ENCODE measurements at regions of chr4 and their contacts with region 1.

Region 1: DNA sequence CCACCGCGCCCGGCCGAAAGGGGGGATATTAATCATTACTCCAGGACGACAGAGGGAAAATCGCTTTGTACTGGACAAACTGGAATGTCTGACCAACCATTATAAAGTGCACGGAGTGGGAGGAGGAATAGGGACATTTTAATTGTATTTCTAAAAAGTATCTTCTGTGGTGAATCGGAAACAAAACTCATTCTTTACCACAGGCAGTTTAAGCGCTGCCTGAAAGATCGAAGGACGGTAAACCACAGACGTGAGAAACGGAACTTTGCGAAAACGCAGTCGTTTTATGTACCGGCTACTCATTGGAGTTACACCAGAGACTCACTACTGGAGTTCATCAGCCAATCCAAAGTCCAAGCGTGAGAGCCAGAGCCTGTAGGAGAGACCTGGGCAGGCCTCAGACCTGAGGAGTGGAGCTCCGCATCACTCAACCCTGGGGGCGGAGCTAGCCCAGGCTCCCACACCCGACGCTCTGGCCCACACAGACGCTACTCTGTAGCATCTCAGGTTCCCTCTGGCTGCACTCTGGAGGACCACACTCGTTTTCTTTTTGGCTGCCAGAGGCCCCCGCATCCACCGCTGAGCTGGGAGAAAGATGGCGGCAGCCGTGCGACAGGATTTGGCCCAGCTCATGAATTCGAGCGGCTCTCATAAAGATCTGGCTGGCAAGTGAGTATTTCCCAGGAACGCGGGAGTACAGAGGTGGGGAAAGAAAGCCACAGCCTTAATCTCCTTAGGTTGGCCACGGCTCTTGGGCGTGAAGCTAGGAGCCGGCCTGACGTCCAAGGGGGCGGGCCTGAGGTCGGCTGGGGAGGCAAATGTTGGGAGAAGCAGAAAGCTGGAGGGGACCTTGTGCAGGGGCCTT is at the start of gene COPS4:
- DNase-seq: peak; percentile 93 to 97 (median 95)
- H3K4me3 ChIP-seq: peak within 1 kb of the TSS; percentile 87
- H3K27ac ChIP-seq: peak within 1 kb of the TSS; percentile 56 to 85
- H3K4me1 ChIP-seq: peaks cover 5% of the 10 kb centered on the region
- H3K27me3 ChIP-seq: no peaks in the 10 kb centered on the region
- CTCF ChIP-seq: peak; percentile 62 to 69 (median 67)
- EP300 ChIP-seq: no peak
- POLR2A ChIP-seq: peak; percentile 5
- total RNA-seq, gene COPS4: 30.7 to 43.2 (median 34.1) TPM

Region 2: GRCh38 chr4:82373816-82374625 is 660.8 kb before region 1 on chr4 and contains the start of gene HNRNPD:
- intact Hi-C with region 1: loop called in 2 of 4 experiments (anchors 10 kb)
- DNase-seq: peak; percentile 96 to 99 (median 98)
- H3K4me3 ChIP-seq: peak within 1 kb of the TSS; percentile 97
- H3K27ac ChIP-seq: peak within 1 kb of the TSS; percentile 94 to 95
- H3K4me1 ChIP-seq: peaks cover 5% of the 10 kb centered on the region
- H3K27me3 ChIP-seq: no peaks in the 10 kb centered on the region
- CTCF ChIP-seq: peak in 2 of 3 donors; percentile 7 to 30
- EP300 ChIP-seq: no peak
- POLR2A ChIP-seq: peak; percentile 91
- total RNA-seq, gene HNRNPD: 85.1 to 243 (median 185) TPM

Region 3: DNA sequence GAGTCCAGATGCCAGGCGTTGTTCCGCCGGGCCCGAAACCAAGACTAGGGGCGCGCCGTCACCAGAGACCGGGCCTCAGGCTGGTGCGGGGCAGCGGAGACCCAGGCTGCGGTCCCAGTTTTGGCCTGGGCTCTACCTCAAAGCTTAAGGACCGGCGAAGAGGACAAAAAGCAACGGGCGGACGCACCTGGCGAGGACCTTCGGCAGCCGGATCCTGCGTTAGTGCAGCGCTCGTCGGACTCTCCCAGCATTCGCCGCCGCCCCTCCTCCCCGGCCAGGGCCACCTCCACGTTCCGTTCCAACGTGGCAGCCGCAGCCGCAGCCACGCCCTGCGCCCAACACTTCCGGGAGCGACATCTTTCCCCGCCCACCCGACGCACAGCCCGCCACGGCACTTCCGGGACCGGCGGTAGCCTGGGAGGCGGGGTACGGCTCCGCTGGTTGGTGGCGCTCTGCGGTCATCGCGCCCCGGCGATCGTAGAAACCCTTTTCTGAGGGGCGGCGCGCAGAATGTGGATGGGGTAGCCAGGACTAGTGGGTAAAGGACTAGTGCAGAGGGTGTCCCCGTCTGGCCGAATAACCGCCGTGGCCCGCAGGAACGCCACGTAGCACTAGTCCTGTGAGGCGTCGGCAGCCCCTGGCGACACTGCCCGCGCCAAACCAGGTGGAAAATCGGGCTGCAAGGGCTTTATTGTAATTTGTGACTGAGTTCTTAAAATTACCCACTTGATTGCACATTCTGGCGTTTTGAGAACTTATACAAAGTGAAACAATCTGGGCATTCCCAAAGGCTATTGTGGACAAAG is 143.8 kb before region 1 on chr4 and contains the start of gene SEC31A:
- intact Hi-C with region 1: loop called in 1 of 4 experiments (anchors 10 kb)
- DNase-seq: peak; percentile 93 to 97 (median 95)
- H3K4me3 ChIP-seq: peak within 1 kb of the TSS; percentile 76
- H3K27ac ChIP-seq: peak within 1 kb of the TSS; percentile 39 to 93
- H3K4me1 ChIP-seq: peaks cover 12% of the 10 kb centered on the region
- H3K27me3 ChIP-seq: no peaks in the 10 kb centered on the region
- CTCF ChIP-seq: no peak
- EP300 ChIP-seq: no peak
- POLR2A ChIP-seq: peak; percentile 93
- total RNA-seq, gene SEC31A: 175 to 315 (median 287) TPM

Region 4: GRCh38 chr4:83455281-83456129 is 420.6 kb after region 1 on chr4 and contains the starts of genes HELQ and MRPS18C:
- intact Hi-C with region 1: loop called in 1 of 4 experiments (anchors 10 kb)
- DNase-seq: peak; percentile 95 to 98 (median 97)
- H3K4me3 ChIP-seq: peak within 1 kb of the TSS; percentile 84
- H3K27ac ChIP-seq: peak within 1 kb of the TSS; percentile 96 to 97
- H3K4me1 ChIP-seq: peaks cover 7% of the 10 kb centered on the region
- H3K27me3 ChIP-seq: no peaks in the 10 kb centered on the region
- CTCF ChIP-seq: peak in 2 of 3 donors; percentile 32 to 40
- EP300 ChIP-seq: no peak
- POLR2A ChIP-seq: peak; percentile 89
- total RNA-seq, gene HELQ: 17.2 to 30.8 (median 22.7) TPM
- total RNA-seq, gene MRPS18C: 13.0 to 47.5 (median 35.7) TPM

Region 5: DNA sequence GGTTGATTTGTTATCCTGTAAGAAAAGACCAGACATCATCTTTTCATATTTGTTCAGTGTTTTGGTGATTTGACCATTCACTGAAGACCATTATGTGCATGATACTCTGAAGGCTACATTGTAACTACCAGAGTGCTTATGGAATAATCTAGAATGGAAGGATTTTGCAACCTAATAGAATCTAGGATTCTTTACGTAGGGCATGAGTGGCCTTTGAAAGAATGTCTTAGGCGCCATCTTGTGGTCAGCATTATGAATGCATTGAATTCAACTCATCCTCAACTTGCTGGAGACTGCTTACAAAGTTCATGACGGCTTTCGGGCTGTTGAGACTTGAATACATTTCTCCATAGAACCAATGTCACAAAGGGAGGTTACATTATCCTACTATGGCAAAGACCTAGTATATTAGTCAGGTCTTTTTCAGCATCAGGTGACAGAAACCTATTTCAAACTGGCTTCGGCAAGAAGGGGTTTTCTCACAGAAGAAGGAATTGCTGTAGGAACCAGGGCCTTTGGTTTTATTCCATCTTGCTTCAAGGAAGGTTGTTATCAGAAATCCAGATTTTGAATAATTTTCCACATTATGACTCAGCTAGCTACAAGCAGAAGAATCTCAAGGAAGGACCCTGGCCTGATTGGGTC is 605.1 kb after region 1 on chr4:
- intact Hi-C with region 1: no loop called
- DNase-seq: peak in 3 of 5 donors; percentile 23 to 71 (median 44)
- H3K4me3 ChIP-seq: no peak overlapping the region
- H3K27ac ChIP-seq: no peak overlapping the region
- H3K4me1 ChIP-seq: peaks cover 3% of the 10 kb centered on the region
- H3K27me3 ChIP-seq: no peaks in the 10 kb centered on the region
- CTCF ChIP-seq: peak; percentile 49 to 81 (median 78)
- EP300 ChIP-seq: no peak
- POLR2A ChIP-seq: no peak

Measured in ovary (tissue), 10 donors.